ENCODE measurements at regions of chr15 and their contacts with region 1.

Region 1: DNA sequence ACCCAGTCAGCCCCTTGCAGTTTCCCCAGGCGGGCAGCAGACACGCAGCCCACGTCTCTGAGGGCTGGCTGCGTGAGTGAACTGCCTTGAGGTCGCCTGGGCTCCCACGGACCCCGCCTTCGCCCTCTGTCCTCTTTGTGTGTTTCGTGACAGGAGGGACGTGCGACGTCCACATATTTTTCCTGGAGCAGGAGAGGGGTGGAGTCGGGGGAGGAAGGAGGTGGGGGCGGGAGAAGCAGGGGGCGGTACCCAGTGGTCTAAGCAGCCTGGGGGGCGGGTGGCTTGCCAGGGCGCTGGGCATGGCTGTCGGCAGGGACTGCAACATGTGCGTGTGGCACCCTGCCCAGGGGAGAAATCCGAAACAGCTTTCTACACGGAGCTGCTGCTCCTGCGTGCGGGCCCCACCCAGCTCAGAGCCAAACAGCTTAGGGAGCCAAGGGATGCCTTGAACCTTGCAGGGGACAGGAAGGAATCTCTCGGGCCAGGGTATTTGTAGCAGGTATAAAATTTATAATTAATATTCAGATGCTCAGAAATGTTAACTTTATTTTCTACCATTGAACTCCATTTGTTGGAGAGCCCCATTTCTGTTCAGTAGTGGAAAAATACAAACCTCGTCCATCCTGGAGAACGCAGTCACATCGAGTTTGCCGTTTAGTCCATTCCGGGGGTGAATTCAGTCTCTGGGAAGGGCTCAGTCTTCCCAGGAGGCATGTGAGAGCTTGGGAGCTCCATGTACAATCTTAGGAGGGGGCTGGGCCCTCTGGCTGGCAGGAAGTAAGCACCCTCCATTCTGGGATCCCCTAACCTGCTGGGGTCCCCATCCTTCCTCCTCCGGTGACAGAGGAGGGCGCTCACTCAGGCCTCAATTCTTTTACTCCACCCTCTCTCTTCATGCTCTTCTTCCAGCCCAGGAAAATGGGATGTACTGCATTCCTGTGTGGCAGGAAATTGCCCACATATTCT is 79.1 kb upstream of the MEF2A start:
- DNase-seq: peak; percentile 86 to 89
- ATAC-seq: peak; percentile 87 to 95 (median 94)
- H3K4me3 ChIP-seq: peak overlapping the region in 9 of 10 donors; percentile 6 to 53 (median 45)
- H3K27ac ChIP-seq: peak overlapping the region; percentile 60 to 92 (median 82)
- H3K4me1 ChIP-seq: peaks cover 12 to 37% (median 26%) of the 10 kb centered on the region in 9 donors
- H3K27me3 ChIP-seq: no peaks in the 10 kb centered on the region
- CTCF ChIP-seq: no peak

Region 2: GRCh38 chr15:99424978-99425656 is 61.5 kb before region 1 on chr15:
- intact Hi-C with region 1: loop called in 1 of 10 experiments (anchors 10 kb)
- DNase-seq: peak; percentile 71 to 80
- ATAC-seq: peak; percentile 79 to 94 (median 90)
- H3K4me3 ChIP-seq: no peak overlapping the region
- H3K27ac ChIP-seq: peak overlapping the region; percentile 70 to 99 (median 94)
- H3K4me1 ChIP-seq: peaks cover 4 to 45% (median 29%) of the 10 kb centered on the region in 9 donors
- H3K27me3 ChIP-seq: no peaks in the 10 kb centered on the region
- CTCF ChIP-seq: no peak

Measured in heart right ventricle (tissue), 16 donors.